ENCODE measurements at regions of chr22 and their contacts with region 1.

Region 1: DNA sequence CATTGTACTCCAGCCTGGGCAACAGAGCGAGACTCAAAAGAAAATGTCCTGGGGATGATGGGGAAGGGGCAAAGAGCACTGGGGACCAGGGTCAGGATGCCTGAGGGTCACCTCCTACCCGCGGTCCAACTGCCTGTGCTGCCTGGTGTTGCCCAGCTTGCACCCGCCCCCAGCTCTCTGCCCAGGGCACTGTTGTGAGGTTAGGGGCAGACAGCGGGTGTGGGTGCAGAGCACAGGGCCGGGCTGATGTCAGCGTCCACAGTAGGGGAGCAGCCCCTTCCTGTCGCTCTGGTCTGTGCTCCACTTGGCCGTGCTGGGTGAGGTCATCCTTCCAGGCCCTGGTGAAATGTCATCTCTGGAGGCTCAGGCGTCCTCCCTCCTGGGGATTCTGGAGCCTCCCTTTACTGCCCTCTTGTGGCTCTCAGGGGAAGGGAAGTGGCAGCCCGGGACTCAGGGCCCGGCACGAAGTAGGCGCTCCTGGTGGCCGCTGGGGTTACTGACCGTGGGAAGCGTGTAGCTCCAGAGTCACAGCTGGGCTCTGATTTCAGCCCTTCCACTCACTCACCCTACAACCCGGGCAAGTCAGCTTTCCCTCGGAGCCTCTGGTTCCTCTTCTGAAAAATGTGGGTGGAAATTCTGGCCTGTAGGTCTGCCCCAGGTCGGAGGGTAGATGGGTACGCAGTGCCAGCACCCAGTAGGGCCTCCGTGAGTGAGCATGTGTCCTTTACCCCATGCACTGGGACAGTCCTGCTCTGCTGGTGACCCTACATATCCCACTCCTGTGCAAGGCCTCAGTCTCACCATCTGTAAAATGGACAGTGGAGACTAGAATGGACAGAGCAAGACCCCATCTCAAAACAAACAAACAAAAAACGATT is 17.3 kb upstream of the PRR5 start:
- DNase-seq: peak; percentile 95
- ATAC-seq: peak; percentile 77
- H3K4me3 Mint-ChIP-seq: peak overlapping the region; percentile 3
- H3K27ac Mint-ChIP-seq: peak overlapping the region; percentile 92
- H3K4me1 Mint-ChIP-seq: peaks cover 56% of the 10 kb centered on the region
- H3K27me3 Mint-ChIP-seq: no peaks in the 10 kb centered on the region
- CTCF ChIP-seq: peak; percentile 100

Region 2: GRCh38 chr22:44658311-44658953 is 26.3 kb before region 1 on chr22:
- CTCF ChIA-PET with region 1: interaction called, 13 read pairs
- POLR2A ChIA-PET with region 1: interaction called, 3 read pairs
- intact Hi-C with region 1: no loop called
- DNase-seq: no peak
- ATAC-seq: no peak
- H3K4me3 Mint-ChIP-seq: no peak overlapping the region
- H3K27ac Mint-ChIP-seq: no peak overlapping the region
- H3K4me1 Mint-ChIP-seq: peaks cover 16% of the 10 kb centered on the region
- H3K27me3 Mint-ChIP-seq: no peaks in the 10 kb centered on the region
- CTCF ChIP-seq: no peak

Region 3: GRCh38 chr22:44669561-44669976 is 15.2 kb before region 1 on chr22:
- CTCF ChIA-PET with region 1: interaction called, 56 read pairs
- POLR2A ChIA-PET with region 1: interaction called, 6 read pairs
- intact Hi-C with region 1: no loop called
- DNase-seq: peak; percentile 30
- ATAC-seq: no peak
- H3K4me3 Mint-ChIP-seq: peak overlapping the region; percentile 72
- H3K27ac Mint-ChIP-seq: no peak overlapping the region
- H3K4me1 Mint-ChIP-seq: peaks cover 50% of the 10 kb centered on the region
- H3K27me3 Mint-ChIP-seq: no peaks in the 10 kb centered on the region
- CTCF ChIP-seq: peak; percentile 52

Region 4: GRCh38 chr22:44701824-44702478 is 17.2 kb after region 1 on chr22 and contains the start of gene PRR5:
- CTCF ChIA-PET with region 1: interaction called, 25 read pairs
- POLR2A ChIA-PET with region 1: interaction called, 4 read pairs
- intact Hi-C with region 1: no loop called
- DNase-seq: peak; percentile 91
- ATAC-seq: peak; percentile 92
- H3K4me3 Mint-ChIP-seq: peak within 1 kb of the TSS; percentile 74
- H3K27ac Mint-ChIP-seq: peak within 1 kb of the TSS; percentile 86
- H3K4me1 Mint-ChIP-seq: peaks cover 41% of the 10 kb centered on the region
- H3K27me3 Mint-ChIP-seq: no peaks in the 10 kb centered on the region
- CTCF ChIP-seq: no peak
- total RNA-seq, gene PRR5: 26.8 to 27.3 TPM

Region 5: GRCh38 chr22:44735540-44736488 is 51.1 kb after region 1 on chr22:
- CTCF ChIA-PET with region 1: interaction called, 17 read pairs
- POLR2A ChIA-PET with region 1: interaction called, 3 read pairs
- intact Hi-C with region 1: no loop called
- DNase-seq: peak; percentile 92
- ATAC-seq: peak; percentile 83
- H3K4me3 Mint-ChIP-seq: no peak overlapping the region
- H3K27ac Mint-ChIP-seq: no peak overlapping the region
- H3K4me1 Mint-ChIP-seq: no peaks in the 10 kb centered on the region
- H3K27me3 Mint-ChIP-seq: no peaks in the 10 kb centered on the region
- CTCF ChIP-seq: peak; percentile 96

Region 6: GRCh38 chr22:44828193-44828592 is 143.4 kb after region 1 on chr22:
- CTCF ChIA-PET with region 1: no interaction called
- POLR2A ChIA-PET with region 1: no interaction called
- intact Hi-C with region 1: no loop called
- DNase-seq: peak; percentile 43
- ATAC-seq: peak; percentile 73
- H3K4me3 Mint-ChIP-seq: no peak overlapping the region
- H3K27ac Mint-ChIP-seq: no peak overlapping the region
- H3K4me1 Mint-ChIP-seq: no peaks in the 10 kb centered on the region
- H3K27me3 Mint-ChIP-seq: peaks cover 10% of the 10 kb centered on the region
- CTCF ChIP-seq: peak; percentile 70

Measured in activated CD8-positive, alpha-beta T cell treated with anti-CD3 and anti-CD28 coated beads for 36 hours (primary cell).